ENCODE measurements at regions of chr15 and their contacts with region 1.

Region 1: DNA sequence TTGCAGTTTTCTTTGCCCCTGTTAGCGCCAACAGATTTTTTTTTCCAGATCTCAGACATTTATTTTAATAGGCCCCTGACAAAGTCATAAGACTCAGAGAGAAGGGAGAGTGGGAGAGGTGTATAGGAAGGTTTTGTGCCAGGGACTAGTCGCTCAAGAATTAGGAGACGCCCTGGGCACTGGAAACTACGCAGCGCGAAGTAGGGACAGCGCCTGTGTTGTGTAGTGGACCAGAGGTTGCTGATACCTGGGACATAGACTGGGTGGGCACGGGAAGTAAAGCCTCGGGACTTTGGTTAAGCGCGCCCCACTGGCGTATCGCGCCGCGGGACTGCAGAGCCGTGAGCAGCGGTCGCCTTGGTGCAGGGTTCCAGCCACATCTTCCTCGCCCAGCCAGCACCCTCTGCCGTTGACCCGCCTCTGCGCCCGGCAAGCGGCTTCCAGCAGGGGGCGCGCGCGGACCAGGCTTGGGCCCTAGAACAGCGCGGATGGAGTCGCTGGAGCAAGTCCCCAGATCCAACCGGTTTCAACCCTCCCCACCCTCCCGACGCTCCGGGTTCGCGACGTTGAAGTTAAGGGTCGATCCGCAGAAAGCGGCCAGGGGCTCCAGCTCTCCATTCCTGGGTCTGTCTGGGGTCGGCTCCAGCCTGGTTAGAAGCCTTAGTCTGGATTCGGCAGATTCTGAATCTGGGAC is 3.0 kb upstream of the ISLR2 start:
- DNase-seq: peak; percentile 96
- H3K4me3 ChIP-seq: peak overlapping the region in 6 of 8 donors; percentile 13 to 65 (median 30)
- H3K27ac ChIP-seq: no peak overlapping the region
- H3K4me1 ChIP-seq: peaks cover 19 to 72% (median 51%) of the 10 kb centered on the region in 6 donors
- H3K27me3 ChIP-seq: peaks cover 3 to 86% (median 53%) of the 10 kb centered on the region in 7 donors
- CTCF ChIP-seq: peak; percentile 80 to 98 (median 94)
- POLR2A ChIP-seq: no peak

Region 2: DNA sequence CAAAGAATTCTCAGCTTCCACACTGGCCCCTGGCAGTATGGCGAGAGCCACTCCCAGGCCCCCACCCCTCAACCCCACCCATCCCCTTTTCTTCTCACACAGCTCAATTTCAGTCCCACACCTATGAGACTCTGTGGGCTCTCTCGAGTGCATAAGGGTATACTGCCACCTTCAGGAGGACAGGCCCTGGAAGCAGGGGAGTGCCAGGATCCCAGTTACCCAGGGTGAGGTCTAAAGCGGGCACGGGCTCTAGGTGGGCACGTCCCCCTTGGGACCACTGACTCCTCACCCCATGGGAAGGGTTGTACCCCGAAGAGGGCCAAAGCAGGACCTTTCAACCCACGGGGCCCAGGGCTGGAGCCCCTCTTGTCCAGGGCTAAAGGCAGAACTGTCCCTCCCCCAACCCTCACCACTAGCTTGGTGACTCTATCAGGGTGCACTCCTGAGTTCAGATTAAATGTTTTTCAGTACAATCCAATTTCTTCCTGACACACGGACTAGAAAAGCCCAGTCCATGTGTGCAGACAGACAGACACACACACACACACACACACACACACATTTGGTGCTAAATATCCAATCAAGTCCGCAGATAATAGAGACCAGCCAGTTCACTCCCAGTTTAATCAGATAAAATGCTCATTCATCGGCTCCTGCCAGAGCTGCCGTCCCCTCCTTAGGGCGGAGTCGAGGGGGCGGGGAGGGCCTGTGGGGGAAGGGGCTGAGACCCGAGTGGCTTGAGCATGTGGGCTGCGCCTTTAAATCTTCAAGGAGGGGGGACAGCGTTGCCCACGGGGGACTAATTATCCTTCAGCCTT is 180.6 kb after region 1 on chr15:
- intact Hi-C with region 1: loop called (anchors 5 kb)
- DNase-seq: no peak
- H3K4me3 ChIP-seq: no peak overlapping the region
- H3K27ac ChIP-seq: no peak overlapping the region
- H3K4me1 ChIP-seq: peaks cover 0 to 18% (median 6%) of the 10 kb centered on the region in 6 donors
- H3K27me3 ChIP-seq: peaks cover 0 to 57% (median 0%) of the 10 kb centered on the region in 7 donors
- CTCF ChIP-seq: peak; percentile 15 to 76 (median 61)
- POLR2A ChIP-seq: no peak

Region 3: DNA sequence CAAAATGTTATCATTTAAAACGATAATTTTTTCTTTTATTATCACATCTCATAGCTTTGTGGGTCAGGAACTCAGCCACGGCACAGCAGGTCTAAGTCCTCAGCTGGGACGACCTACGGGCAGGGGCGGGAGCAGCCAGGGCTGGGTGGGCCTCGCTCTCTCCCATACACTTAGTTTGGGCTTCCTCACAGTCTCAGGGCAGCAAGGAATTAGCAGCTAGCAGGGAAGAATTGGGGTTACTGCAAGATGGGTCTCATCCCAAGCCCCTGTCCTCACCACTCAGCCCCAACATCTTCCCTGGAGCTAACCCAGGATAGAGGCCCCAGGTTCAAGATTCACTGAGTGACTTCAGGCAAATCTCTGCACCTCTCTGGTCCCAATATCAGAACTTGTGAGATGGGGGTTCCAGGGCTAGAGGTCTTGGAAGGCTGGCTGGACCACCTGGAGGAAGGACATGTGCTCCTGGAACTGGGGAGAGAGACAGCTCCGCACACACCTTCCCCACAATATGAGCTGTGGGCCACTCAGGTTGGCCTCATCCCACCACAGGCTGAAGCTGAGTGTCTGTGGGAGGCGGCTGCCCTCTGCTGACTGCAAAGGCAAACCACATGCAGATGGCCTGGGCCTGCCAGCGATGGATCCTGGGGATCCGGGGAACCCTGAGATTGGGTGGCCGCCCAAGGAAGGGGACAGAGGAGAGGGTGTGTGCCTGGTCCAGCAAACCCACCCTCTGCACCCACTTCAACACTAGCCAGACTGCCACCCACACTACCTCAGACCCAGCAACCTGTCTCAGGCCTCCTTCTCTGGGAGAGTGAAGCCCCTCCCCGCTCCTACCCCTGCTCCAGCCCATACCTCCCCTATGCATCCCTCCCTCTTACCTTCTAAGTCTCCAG is 195.0 kb after region 1 on chr15:
- intact Hi-C with region 1: loop called (anchors 5 kb)
- DNase-seq: peak; percentile 89
- H3K4me3 ChIP-seq: no peak overlapping the region
- H3K27ac ChIP-seq: no peak overlapping the region
- H3K4me1 ChIP-seq: peaks cover 5 to 60% (median 20%) of the 10 kb centered on the region in 6 donors
- H3K27me3 ChIP-seq: no peaks in the 10 kb centered on the region
- CTCF ChIP-seq: peak; percentile 65 to 90 (median 82)
- POLR2A ChIP-seq: no peak

Measured in spleen (tissue), 13 donors.